Activated CD8-positive, alpha-beta T cell treated with anti-CD3 and anti-CD28 coated beads for 36 hours (primary cell): ENCODE measurements at regions of chr2 and their contacts with region 1.

Region 1: DNA sequence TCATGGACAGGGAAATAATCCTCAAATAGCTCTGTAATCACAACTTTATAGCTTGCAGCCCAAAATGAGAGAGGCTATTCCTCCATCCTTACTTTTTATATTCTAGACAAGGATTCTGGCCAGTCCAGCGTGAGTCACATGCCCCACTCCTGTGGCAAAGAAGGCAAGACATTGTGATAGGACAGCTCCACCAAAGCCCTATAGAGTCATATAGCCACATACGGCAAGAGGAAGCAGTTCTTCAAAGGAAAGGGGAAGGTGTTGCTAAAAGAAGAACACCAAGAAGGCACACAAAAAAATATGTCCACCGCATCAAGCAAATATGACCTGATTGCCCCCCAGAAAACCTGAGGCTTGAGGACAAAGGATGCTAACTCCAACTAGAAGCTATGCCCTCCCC is 3.4 kb upstream of the GFPT1 start:
- DNase-seq: no peak
- ATAC-seq: no peak
- H3K4me3 Mint-ChIP-seq: no peak overlapping the region
- H3K27ac Mint-ChIP-seq: no peak overlapping the region
- H3K4me1 Mint-ChIP-seq: peaks cover 20% of the 10 kb centered on the region
- H3K27me3 Mint-ChIP-seq: no peaks in the 10 kb centered on the region
- CTCF ChIP-seq: no peak

Region 2: DNA sequence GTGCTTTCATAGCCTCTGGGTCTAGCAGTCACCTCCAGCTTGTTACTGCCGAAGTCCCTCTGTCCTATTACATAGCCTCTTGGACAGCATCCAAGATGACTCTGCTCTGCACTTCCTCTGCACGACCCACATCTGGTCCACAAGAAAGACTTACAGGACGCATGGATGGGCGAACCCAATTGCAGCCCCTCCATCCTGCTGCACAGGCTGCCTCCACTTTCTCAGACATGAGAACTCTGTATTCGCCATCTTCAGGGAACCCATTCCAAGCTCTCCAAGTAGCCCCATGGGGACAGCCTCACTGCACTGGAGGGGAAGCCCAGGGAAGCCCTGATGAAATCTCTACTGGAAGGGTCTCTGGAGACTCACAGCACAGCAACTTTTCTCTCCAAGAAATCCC is 175.6 kb before region 1 on chr2:
- CTCF ChIA-PET with region 1: no interaction called
- POLR2A ChIA-PET with region 1: no interaction called
- intact Hi-C with region 1: no loop called
- DNase-seq: no peak
- ATAC-seq: no peak
- H3K4me3 Mint-ChIP-seq: no peak overlapping the region
- H3K27ac Mint-ChIP-seq: no peak overlapping the region
- H3K4me1 Mint-ChIP-seq: no peaks in the 10 kb centered on the region
- H3K27me3 Mint-ChIP-seq: no peaks in the 10 kb centered on the region
- CTCF ChIP-seq: no peak

Region 3: GRCh38 chr2:69272803-69273471 is 117.5 kb before region 1 on chr2:
- CTCF ChIA-PET with region 1: no interaction called
- POLR2A ChIA-PET with region 1: no interaction called
- intact Hi-C with region 1: no loop called
- DNase-seq: no peak
- ATAC-seq: no peak
- H3K4me3 Mint-ChIP-seq: no peak overlapping the region
- H3K27ac Mint-ChIP-seq: no peak overlapping the region
- H3K4me1 Mint-ChIP-seq: no peaks in the 10 kb centered on the region
- H3K27me3 Mint-ChIP-seq: peaks cover 27% of the 10 kb centered on the region
- CTCF ChIP-seq: no peak

Region 4: DNA sequence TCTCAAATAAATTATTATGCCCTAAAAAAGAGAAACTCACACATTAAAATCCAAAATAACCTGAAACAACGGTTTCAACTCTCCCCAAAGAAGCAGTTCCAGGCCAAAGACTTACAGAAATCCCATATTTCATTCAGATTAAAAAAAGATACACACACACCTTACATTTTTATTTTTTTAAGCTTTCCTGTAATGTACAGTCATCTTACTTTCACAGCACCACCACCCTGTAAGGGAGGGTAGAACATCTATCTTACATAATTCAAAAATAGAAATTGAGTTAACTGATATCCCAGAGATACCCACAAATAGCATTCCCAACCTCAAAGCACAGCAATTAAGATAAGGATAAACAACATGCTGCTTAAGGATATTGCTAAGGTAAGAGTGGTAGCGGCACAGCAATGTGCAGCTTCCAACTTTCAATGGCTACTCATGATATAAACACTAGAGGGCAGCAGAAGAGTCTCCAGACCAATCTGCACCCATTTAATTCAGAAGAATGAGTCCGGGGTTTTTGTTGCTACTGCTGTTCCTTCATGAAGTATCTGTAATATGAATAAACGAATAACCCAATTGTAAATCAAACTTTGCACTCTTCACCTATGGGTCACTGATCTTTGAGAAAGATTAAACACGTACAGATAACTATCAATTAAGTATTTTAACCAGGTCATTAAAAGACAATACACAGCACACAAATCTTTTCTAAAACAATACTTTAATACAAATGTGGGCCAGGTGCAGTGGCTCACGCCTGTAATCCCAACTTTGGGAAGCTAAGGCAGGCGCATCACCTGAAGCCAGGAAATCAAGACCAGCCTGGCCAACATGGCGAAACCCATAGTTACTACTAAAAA is 14.7 kb before region 1 on chr2:
- CTCF ChIA-PET with region 1: interaction called, 16 read pairs
- POLR2A ChIA-PET with region 1: interaction called, 4 read pairs
- intact Hi-C with region 1: no loop called
- DNase-seq: peak; percentile 29
- ATAC-seq: peak; percentile 78
- H3K4me3 Mint-ChIP-seq: no peak overlapping the region
- H3K27ac Mint-ChIP-seq: peak overlapping the region; percentile 25
- H3K4me1 Mint-ChIP-seq: peaks cover 19% of the 10 kb centered on the region
- H3K27me3 Mint-ChIP-seq: no peaks in the 10 kb centered on the region
- CTCF ChIP-seq: peak; percentile 79

Region 5: GRCh38 chr2:69436938-69437750 is 46.7 kb after region 1 on chr2 and contains the start of gene NFU1:
- CTCF ChIA-PET with region 1: interaction called, 13 read pairs
- POLR2A ChIA-PET with region 1: interaction called, 7 read pairs
- intact Hi-C with region 1: no loop called
- DNase-seq: peak; percentile 95
- ATAC-seq: peak; percentile 94
- H3K4me3 Mint-ChIP-seq: peak within 1 kb of the TSS; percentile 97
- H3K27ac Mint-ChIP-seq: peak within 1 kb of the TSS; percentile 93
- H3K4me1 Mint-ChIP-seq: peaks cover 28% of the 10 kb centered on the region
- H3K27me3 Mint-ChIP-seq: no peaks in the 10 kb centered on the region
- CTCF ChIP-seq: peak; percentile 36
- total RNA-seq, gene NFU1: 41.0 to 46.2 TPM

Region 6: GRCh38 chr2:69773206-69773767 is 382.8 kb after region 1 on chr2:
- CTCF ChIA-PET with region 1: no interaction called
- POLR2A ChIA-PET with region 1: no interaction called
- intact Hi-C with region 1: no loop called
- DNase-seq: no peak
- ATAC-seq: peak; percentile 60
- H3K4me3 Mint-ChIP-seq: no peak overlapping the region
- H3K27ac Mint-ChIP-seq: peak overlapping the region; percentile 77
- H3K4me1 Mint-ChIP-seq: peaks cover 56% of the 10 kb centered on the region
- H3K27me3 Mint-ChIP-seq: no peaks in the 10 kb centered on the region
- CTCF ChIP-seq: no peak